Ascending aorta (tissue), 2 donors: ENCODE measurements at regions of chr3 and their contacts with region 1.

Region 1: DNA sequence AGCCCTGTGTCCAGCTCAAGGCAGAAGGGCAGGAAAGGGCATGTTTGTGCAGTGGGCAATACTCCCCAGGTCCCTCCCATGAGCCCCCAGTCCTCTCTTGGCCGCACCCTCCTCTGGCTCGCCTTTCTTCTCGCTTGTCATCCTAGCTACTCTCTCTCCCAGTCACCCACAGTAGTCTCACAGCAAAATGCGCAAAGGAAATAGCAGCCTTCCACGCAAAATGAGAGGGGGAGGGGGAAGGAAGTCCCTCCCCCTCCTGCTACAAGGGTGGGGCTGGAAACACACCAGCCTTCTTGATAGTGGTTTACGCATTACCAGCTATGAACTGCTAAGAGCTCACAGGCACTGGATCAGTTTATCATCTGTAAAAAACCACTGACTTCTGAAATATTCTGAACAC is 83.8 kb downstream of the GADL1 start:
- DNase-seq: peak in 1 of 2 donors; percentile 63
- H3K4me3 ChIP-seq: peak overlapping the region in 1 of 2 donors; percentile 47
- H3K27ac ChIP-seq: peak overlapping the region; percentile 69 to 83
- H3K4me1 ChIP-seq: peaks cover 3 to 14% of the 10 kb centered on the region in 2 donors
- H3K27me3 ChIP-seq: no peaks in the 10 kb centered on the region
- CTCF ChIP-seq: no peak

Region 2: GRCh38 chr3:30372837-30373236 is 437.8 kb before region 1 on chr3:
- intact Hi-C with region 1: no loop called
- DNase-seq: no peak
- H3K4me3 ChIP-seq: no peak overlapping the region
- H3K27ac ChIP-seq: no peak overlapping the region
- H3K4me1 ChIP-seq: peaks cover 0 to 11% of the 10 kb centered on the region in 2 donors
- H3K27me3 ChIP-seq: no peaks in the 10 kb centered on the region
- CTCF ChIP-seq: no peak

Region 3: DNA sequence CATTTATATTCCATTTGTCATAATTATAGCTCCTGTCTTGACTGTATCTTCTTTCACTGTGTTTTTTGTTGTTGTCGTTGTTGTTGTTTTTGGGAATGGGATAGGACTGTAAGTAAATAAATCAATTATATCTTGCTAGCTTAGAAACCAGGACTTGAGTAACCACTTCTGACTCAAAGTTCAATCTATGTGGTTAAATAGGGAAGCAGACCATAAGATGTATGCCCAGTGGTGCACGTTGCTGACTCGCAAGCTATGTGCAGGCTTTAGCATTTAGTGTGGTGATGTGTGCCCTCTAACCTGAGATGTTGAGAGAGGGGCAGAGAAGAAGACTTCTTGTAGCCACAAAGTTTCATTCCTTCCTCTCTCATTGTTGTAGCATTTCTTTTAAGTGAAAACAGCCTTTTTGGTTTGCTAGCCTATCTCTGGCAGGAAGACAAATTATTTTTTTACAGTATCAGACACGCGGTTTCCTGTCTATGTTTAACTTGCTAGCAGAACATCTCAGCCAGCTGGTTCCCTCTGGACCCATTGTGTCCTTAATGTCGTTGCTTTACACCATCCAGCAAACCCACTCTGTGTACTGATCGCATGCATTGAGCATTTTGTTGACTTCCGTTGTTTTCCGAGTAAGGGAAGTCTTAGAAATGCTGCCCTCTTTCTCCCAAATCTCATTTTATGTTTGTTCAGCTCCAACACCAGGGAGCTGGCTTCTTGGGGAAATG is 152.1 kb before region 1 on chr3:
- intact Hi-C with region 1: no loop called
- DNase-seq: no peak
- H3K4me3 ChIP-seq: peak overlapping the region in 1 of 2 donors; percentile 41
- H3K27ac ChIP-seq: peak overlapping the region; percentile 62 to 72
- H3K4me1 ChIP-seq: peaks cover 38 to 69% of the 10 kb centered on the region in 2 donors
- H3K27me3 ChIP-seq: no peaks in the 10 kb centered on the region
- CTCF ChIP-seq: no peak

Region 4: GRCh38 chr3:30826531-30826942 is 15.9 kb after region 1 on chr3:
- intact Hi-C with region 1: loop called (anchors 2 kb)
- DNase-seq: no peak
- H3K4me3 ChIP-seq: no peak overlapping the region
- H3K27ac ChIP-seq: peak overlapping the region; percentile 62 to 82
- H3K4me1 ChIP-seq: peaks cover 4 to 13% of the 10 kb centered on the region in 2 donors
- H3K27me3 ChIP-seq: no peaks in the 10 kb centered on the region
- CTCF ChIP-seq: no peak

Region 5: DNA sequence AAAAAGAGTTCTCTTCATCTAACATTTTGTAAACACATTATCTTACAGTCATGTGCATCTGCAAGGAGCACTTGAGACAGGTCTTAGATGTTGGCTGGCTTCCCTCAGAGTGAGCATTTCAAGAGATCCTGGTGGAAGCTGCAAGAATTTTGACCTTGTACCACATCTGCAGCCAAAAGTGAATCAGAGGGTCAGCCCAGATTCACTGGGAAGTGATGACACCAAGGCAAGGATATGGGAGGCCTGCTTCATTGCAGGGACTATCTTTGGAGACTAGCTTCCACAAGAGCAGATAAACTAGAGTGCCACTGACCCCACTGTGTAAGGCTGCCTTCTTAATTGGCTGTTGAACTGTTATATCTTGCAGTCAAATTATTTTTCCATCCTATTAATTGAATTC is 105.2 kb after region 1 on chr3:
- intact Hi-C with region 1: no loop called
- DNase-seq: no peak
- H3K4me3 ChIP-seq: no peak overlapping the region
- H3K27ac ChIP-seq: no peak overlapping the region
- H3K4me1 ChIP-seq: no peaks in the 10 kb centered on the region
- H3K27me3 ChIP-seq: no peaks in the 10 kb centered on the region
- CTCF ChIP-seq: no peak